MCF 10A (cell line): ENCODE measurements at regions of chr20 and their contacts with region 1.

Region 1: GRCh38 chr20:47501483-47502270 is at the start of gene NCOA3:
- DNase-seq: peak; percentile 95
- H3K4me3 Mint-ChIP-seq: peak within 1 kb of the TSS; percentile 94
- H3K27ac Mint-ChIP-seq: peak within 1 kb of the TSS; percentile 95
- H3K4me1 Mint-ChIP-seq: peaks cover 24% of the 10 kb centered on the region
- H3K27me3 Mint-ChIP-seq: no peaks in the 10 kb centered on the region
- CTCF ChIP-seq: peak; percentile 41
- total RNA-seq, gene NCOA3: 61.4 and 68.6 TPM in 2 replicates

Region 2: GRCh38 chr20:47356526-47357295 is 145.0 kb before region 1 on chr20 and contains the start of gene ZMYND8:
- CTCF ChIA-PET with region 1: interaction called, 4 read pairs
- POLR2A ChIA-PET with region 1: interaction called, 108 read pairs
- intact Hi-C with region 1: no loop called
- DNase-seq: peak; percentile 94
- H3K4me3 Mint-ChIP-seq: peak within 1 kb of the TSS; percentile 70
- H3K27ac Mint-ChIP-seq: no peak within 1 kb of the TSS
- H3K4me1 Mint-ChIP-seq: peaks cover 72% of the 10 kb centered on the region
- H3K27me3 Mint-ChIP-seq: no peaks in the 10 kb centered on the region
- CTCF ChIP-seq: no peak
- total RNA-seq, gene ZMYND8: 126 and 127 TPM in 2 replicates

Region 3: GRCh38 chr20:47453142-47453782 is 48.4 kb before region 1 on chr20:
- CTCF ChIA-PET with region 1: interaction called, 5 read pairs
- POLR2A ChIA-PET with region 1: interaction called, 135 read pairs
- intact Hi-C with region 1: no loop called
- DNase-seq: peak; percentile 92
- H3K4me3 Mint-ChIP-seq: peak overlapping the region; percentile 45
- H3K27ac Mint-ChIP-seq: peak overlapping the region; percentile 91
- H3K4me1 Mint-ChIP-seq: peaks cover 27% of the 10 kb centered on the region
- H3K27me3 Mint-ChIP-seq: no peaks in the 10 kb centered on the region
- CTCF ChIP-seq: no peak

Region 4: GRCh38 chr20:47515843-47516242 is 14.2 kb after region 1 on chr20:
- CTCF ChIA-PET with region 1: interaction called, 4 read pairs
- POLR2A ChIA-PET with region 1: interaction called, 26 read pairs
- intact Hi-C with region 1: no loop called
- DNase-seq: no peak
- H3K4me3 Mint-ChIP-seq: no peak overlapping the region
- H3K27ac Mint-ChIP-seq: peak overlapping the region; percentile 70
- H3K4me1 Mint-ChIP-seq: peaks cover 7% of the 10 kb centered on the region
- H3K27me3 Mint-ChIP-seq: no peaks in the 10 kb centered on the region
- CTCF ChIP-seq: no peak

Region 5: GRCh38 chr20:47544240-47544639 is 42.6 kb after region 1 on chr20:
- CTCF ChIA-PET with region 1: interaction called, 3 read pairs
- POLR2A ChIA-PET with region 1: interaction called, 17 read pairs
- intact Hi-C with region 1: no loop called
- DNase-seq: peak; percentile 24
- H3K4me3 Mint-ChIP-seq: no peak overlapping the region
- H3K27ac Mint-ChIP-seq: no peak overlapping the region
- H3K4me1 Mint-ChIP-seq: peaks cover 41% of the 10 kb centered on the region
- H3K27me3 Mint-ChIP-seq: no peaks in the 10 kb centered on the region
- CTCF ChIP-seq: no peak

Region 6: GRCh38 chr20:47620808-47621805 is 119.4 kb after region 1 on chr20:
- CTCF ChIA-PET with region 1: interaction called, 5 read pairs
- POLR2A ChIA-PET with region 1: interaction called, 16 read pairs
- intact Hi-C with region 1: loop called (anchors 1 kb)
- DNase-seq: peak; percentile 53
- H3K4me3 Mint-ChIP-seq: no peak overlapping the region
- H3K27ac Mint-ChIP-seq: peak overlapping the region; percentile 19
- H3K4me1 Mint-ChIP-seq: peaks cover 12% of the 10 kb centered on the region
- H3K27me3 Mint-ChIP-seq: no peaks in the 10 kb centered on the region
- CTCF ChIP-seq: peak; percentile 72